ENCODE measurements at regions of chr10 and their contacts with region 1.

Region 1: GRCh38 chr10:58531084-58531695 is 18.5 kb downstream of the BICC1 start:
- DNase-seq: peak; percentile 11
- CTCF ChIP-seq: peak; percentile 72

Region 2: GRCh38 chr10:58518775-58519174 is 12.4 kb before region 1 on chr10:
- CTCF ChIA-PET with region 1: interaction called, 34 read pairs
- POLR2A ChIA-PET with region 1: no interaction called
- DNase-seq: no peak
- CTCF ChIP-seq: no peak

Region 3: GRCh38 chr10:58704671-58705141 is 173.5 kb after region 1 on chr10:
- CTCF ChIA-PET with region 1: no interaction called
- POLR2A ChIA-PET with region 1: no interaction called
- DNase-seq: no peak
- CTCF ChIP-seq: no peak

Region 4: GRCh38 chr10:58818900-58819299 is 287.7 kb after region 1 on chr10:
- CTCF ChIA-PET with region 1: no interaction called
- POLR2A ChIA-PET with region 1: no interaction called
- DNase-seq: no peak
- CTCF ChIP-seq: no peak